Common myeloid progenitor, CD34-positive (primary cell): ENCODE measurements at regions of chr15 and their contacts with region 1.

Region 1: DNA sequence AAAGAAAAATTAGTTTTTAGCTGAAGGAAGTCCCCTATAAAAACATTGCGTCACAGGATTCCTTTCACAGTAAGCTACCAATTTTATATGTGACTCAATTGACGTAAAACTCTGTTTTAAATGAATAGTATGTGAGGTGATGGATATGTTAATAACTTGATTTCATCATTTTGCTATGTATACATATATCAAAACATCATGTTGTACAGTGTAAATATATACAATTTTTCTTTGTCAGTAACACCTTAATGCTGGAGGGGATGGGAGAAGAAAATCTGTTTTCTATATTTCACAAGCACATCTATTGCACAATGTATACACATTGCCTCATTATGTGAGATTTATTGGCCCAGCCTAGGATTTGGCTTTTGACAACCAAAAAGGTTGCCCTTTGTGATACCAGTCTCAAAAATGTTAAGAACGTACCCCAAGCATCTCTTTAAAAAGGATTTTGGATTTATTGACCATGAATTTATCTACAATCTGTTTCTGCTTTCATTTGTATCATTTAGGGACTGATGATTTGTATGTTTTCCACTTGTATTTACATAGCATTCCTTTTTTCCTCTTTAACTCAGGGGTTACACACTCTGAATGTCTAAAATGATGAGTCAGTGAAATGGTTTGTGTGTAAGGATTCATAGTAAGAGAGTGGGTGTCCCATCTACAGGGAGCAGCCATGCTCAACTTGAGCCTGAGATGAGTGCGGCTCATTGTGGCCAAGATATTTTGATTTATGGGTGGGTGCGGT is 62.6 kb downstream of the CRTC3 start:
- DNase-seq: no peak
- H3K4me3 ChIP-seq: no peak overlapping the region
- H3K27ac ChIP-seq: no peak overlapping the region
- H3K4me1 ChIP-seq: peaks cover 11 to 50% (median 35%) of the 10 kb centered on the region in 4 experiments
- H3K27me3 ChIP-seq: no peaks in the 10 kb centered on the region

Region 2: GRCh38 chr15:90571063-90571541 is 21.2 kb before region 1 on chr15:
- CTCF ChIA-PET with region 1: no interaction called
- POLR2A ChIA-PET with region 1: no interaction called
- DNase-seq: peak in 2 of 3 donors; percentile 44 to 70
- H3K4me3 ChIP-seq: peak overlapping the region in 2 of 7 experiments; percentile 25 to 45
- H3K27ac ChIP-seq: peak overlapping the region in 1 of 2 experiments; percentile 47
- H3K4me1 ChIP-seq: peaks cover under 1 to 18% (median 5%) of the 10 kb centered on the region in 4 experiments
- H3K27me3 ChIP-seq: no peaks in the 10 kb centered on the region

Region 3: DNA sequence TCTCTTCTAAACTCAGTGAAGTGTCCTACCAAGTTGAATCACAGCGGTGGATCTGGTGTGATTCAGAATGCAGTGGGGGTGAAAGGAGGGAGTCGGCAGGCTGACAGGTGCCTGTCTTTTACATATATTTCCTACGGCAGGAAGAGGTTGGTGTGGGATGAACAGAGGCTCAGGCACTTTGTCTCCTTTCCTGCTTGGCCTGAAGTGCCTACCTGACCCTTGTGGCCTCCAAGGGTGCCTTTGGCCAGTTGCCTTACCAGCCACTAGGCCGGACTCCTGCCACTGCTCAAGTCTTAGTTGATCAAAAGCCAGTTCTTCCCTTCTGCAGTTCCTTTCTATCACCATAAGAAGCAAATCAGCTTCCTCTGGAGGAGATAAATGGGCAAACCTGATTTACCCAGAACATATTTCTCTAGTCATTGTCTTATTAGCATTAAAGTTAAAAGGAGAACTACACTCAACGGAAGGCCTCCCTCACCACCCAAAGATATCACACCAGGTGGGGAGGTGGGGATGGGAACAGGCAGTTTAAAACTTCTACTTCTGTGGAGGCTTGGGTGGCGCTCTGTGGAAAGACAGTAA is 10.4 kb before region 1 on chr15:
- CTCF ChIA-PET with region 1: interaction called, 11 read pairs
- POLR2A ChIA-PET with region 1: no interaction called
- DNase-seq: peak in 2 of 3 donors; percentile 70 to 78
- H3K4me3 ChIP-seq: no peak overlapping the region
- H3K27ac ChIP-seq: no peak overlapping the region
- H3K4me1 ChIP-seq: peaks cover 10 to 47% (median 23%) of the 10 kb centered on the region in 4 experiments
- H3K27me3 ChIP-seq: no peaks in the 10 kb centered on the region

Region 4: GRCh38 chr15:90701880-90702630 is 109.7 kb after region 1 on chr15:
- CTCF ChIA-PET with region 1: no interaction called
- POLR2A ChIA-PET with region 1: no interaction called
- DNase-seq: peak; percentile 59 to 71 (median 62)
- H3K4me3 ChIP-seq: no peak overlapping the region
- H3K27ac ChIP-seq: no peak overlapping the region
- H3K4me1 ChIP-seq: peaks cover 0 to 32% (median 18%) of the 10 kb centered on the region in 4 experiments
- H3K27me3 ChIP-seq: no peaks in the 10 kb centered on the region